ENCODE measurements at regions of chr7 and their contacts with region 1.

Region 1: DNA sequence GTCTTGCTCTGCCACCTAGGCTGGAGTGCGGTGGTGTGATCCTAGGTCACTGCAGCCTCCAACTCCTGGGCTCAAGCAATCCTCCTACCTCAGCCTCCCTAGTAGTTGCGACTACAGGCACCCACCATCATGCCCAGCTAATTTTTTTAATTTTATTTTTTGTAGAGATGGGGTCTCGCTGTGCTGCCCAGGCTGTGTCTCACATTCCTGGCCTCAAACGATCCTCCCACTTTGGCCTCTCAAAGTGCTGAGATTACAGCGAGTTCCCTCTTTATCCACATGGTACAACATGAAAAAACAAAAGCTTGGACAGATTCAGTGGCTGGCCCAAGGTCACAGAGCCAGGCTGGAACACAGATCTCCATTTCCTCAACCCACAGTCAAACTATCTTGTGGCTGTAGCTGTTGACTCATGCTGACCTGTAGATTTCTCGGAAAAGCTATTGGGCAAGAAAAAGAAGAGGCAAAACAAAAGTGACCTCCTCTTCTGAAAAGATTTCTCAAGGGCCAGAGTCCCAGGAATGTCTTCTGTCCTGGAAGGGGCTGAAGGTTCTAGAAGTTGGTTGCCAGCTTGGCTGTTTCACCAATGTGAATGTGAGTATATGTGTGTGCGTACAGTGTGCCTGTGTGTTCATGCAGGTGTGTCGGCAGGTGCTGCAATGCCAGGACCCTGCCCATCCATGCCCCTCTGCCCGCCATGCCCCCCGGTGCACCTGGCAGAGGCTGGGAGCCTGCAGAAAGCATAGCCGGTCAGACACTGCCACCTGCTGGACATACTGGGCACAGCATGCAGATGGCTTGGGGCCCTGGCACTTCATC is 28.4 kb downstream of the TMEM130 start:
- DNase-seq: peak; percentile 72 to 76
- H3K4me3 ChIP-seq: no peak overlapping the region
- H3K27ac ChIP-seq: no peak overlapping the region
- H3K4me1 ChIP-seq: no peaks in the 10 kb centered on the region
- H3K27me3 ChIP-seq: no peaks in the 10 kb centered on the region
- CTCF ChIP-seq: peak; percentile 98

Region 2: GRCh38 chr7:98409843-98410242 is 431.5 kb before region 1 on chr7:
- CTCF ChIA-PET with region 1: interaction called, 15 read pairs
- POLR2A ChIA-PET with region 1: no interaction called
- intact Hi-C with region 1: no loop called
- DNase-seq: no peak
- H3K4me3 ChIP-seq: no peak overlapping the region
- H3K27ac ChIP-seq: peak overlapping the region; percentile 28; the same call in 1 of the 2 replicates
- H3K4me1 ChIP-seq: 0 out of 2 replicates have a peak, but pooled peaks cover 6% of the 10 kb centered on the region
- H3K27me3 ChIP-seq: no peaks in the 10 kb centered on the region
- CTCF ChIP-seq: no peak

Region 3: GRCh38 chr7:98733036-98733435 is 108.4 kb before region 1 on chr7:
- CTCF ChIA-PET with region 1: no interaction called
- POLR2A ChIA-PET with region 1: no interaction called
- intact Hi-C with region 1: loop called (anchors 2 kb)
- DNase-seq: peak in 1 of 2 experiments; percentile 56
- H3K4me3 ChIP-seq: no peak overlapping the region
- H3K27ac ChIP-seq: no peak overlapping the region
- H3K4me1 ChIP-seq: no peaks in the 10 kb centered on the region
- H3K27me3 ChIP-seq: peaks cover 53% of the 10 kb centered on the region
- CTCF ChIP-seq: peak; percentile 73

Region 4: GRCh38 chr7:98878365-98879165 is 37.2 kb after region 1 on chr7 and contains the start of gene TRRAP:
- CTCF ChIA-PET with region 1: interaction called, 15 read pairs
- POLR2A ChIA-PET with region 1: no interaction called
- intact Hi-C with region 1: loop called (anchors 5 kb)
- DNase-seq: peak in 1 of 2 experiments; percentile 76
- H3K4me3 ChIP-seq: peak within 1 kb of the TSS; percentile 99
- H3K27ac ChIP-seq: peak within 1 kb of the TSS; percentile 16; the same call in 1 of the 2 replicates
- H3K4me1 ChIP-seq: peaks cover 13% of the 10 kb centered on the region; the same call in 1 of the 2 replicates
- H3K27me3 ChIP-seq: no peaks in the 10 kb centered on the region
- CTCF ChIP-seq: peak; percentile 84; the same call in 1 of the 2 replicates
- total RNA-seq, gene TRRAP: 46.8 and 55.8 TPM in 2 replicates

Region 5: DNA sequence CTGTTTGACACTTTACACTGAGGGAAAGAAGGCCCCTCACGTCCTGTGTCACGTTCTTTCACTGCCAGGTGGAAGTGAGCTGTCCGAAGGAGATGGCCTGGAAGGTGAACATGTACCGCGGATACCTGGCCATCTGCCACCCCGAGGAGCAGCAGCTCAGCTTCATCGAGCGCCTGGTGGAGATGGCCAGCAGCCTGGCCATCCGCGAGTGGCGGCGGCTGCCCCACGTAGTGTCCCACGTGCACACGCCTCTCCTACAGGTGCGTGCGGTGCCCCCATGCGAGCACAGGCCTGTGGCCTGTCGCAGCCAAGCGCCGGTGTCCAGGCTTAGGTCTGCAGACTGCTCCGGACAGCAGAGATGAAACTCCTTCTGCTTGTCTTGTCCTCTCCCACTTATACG is 140.3 kb after region 1 on chr7:
- CTCF ChIA-PET with region 1: no interaction called
- POLR2A ChIA-PET with region 1: no interaction called
- intact Hi-C with region 1: no loop called
- DNase-seq: no peak
- H3K4me3 ChIP-seq: no peak overlapping the region
- H3K27ac ChIP-seq: no peak overlapping the region
- H3K4me1 ChIP-seq: no peaks in the 10 kb centered on the region
- H3K27me3 ChIP-seq: no peaks in the 10 kb centered on the region
- CTCF ChIP-seq: no peak

Measured in PC-9 (cell line).